ENCODE measurements at regions of chr7 and their contacts with region 1.

Region 1: DNA sequence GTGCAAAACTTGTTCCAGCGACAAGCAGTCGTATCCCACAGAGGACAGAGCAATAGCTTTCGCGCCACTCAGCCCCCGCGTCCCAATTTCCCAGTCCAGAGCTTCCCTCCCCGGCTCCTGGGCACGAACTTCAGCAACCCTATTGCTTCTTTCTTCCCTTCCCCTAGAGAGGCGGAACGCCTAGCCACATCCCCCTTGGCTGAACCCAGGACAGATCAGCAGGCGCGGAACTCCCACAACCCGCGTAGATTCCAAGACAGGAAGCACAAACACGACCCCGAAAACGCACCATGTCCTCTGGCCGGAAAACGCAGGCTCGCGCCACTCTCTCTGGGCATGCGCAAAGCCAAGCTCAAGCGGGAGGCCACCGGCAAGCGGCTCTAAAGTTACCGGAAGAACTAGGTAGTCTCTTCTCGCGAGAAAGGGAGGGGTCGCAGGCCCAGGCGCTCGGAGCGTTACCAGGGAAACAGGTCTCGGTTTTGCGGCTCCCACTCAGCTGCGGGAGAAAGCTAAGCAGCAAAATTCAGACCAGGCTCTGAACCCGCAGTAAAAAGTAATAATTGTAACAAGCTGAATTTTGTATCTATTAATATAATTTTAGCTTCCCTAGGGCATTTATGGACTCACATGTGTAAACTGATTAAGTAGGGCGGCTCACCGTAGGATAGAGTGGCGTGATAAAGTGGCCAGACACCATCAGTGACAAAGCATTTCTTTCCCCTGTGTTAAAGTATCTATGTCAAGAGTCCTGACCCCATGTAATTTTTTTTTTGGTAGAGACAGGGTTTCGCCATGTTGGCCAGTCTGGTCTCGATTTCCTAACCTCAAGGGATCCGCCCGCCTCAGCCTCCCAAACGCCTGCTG is at the start of gene TMEM209:
- DNase-seq: peak; percentile 97
- H3K4me3 Mint-ChIP-seq: peak within 1 kb of the TSS; percentile 96
- H3K27ac Mint-ChIP-seq: peak within 1 kb of the TSS; percentile 98
- H3K4me1 Mint-ChIP-seq: peaks cover 21% of the 10 kb centered on the region
- H3K27me3 Mint-ChIP-seq: peaks cover 2% of the 10 kb centered on the region
- total RNA-seq, gene TMEM209: 35.5 to 35.9 TPM

Region 2: GRCh38 chr7:129958643-129959470 is 246.5 kb before region 1 on chr7:
- CTCF ChIA-PET with region 1: no interaction called
- POLR2A ChIA-PET with region 1: no interaction called
- intact Hi-C with region 1: no loop called
- DNase-seq: no peak
- H3K4me3 Mint-ChIP-seq: no peak overlapping the region
- H3K27ac Mint-ChIP-seq: no peak overlapping the region
- H3K4me1 Mint-ChIP-seq: no peaks in the 10 kb centered on the region
- H3K27me3 Mint-ChIP-seq: no peaks in the 10 kb centered on the region

Region 3: DNA sequence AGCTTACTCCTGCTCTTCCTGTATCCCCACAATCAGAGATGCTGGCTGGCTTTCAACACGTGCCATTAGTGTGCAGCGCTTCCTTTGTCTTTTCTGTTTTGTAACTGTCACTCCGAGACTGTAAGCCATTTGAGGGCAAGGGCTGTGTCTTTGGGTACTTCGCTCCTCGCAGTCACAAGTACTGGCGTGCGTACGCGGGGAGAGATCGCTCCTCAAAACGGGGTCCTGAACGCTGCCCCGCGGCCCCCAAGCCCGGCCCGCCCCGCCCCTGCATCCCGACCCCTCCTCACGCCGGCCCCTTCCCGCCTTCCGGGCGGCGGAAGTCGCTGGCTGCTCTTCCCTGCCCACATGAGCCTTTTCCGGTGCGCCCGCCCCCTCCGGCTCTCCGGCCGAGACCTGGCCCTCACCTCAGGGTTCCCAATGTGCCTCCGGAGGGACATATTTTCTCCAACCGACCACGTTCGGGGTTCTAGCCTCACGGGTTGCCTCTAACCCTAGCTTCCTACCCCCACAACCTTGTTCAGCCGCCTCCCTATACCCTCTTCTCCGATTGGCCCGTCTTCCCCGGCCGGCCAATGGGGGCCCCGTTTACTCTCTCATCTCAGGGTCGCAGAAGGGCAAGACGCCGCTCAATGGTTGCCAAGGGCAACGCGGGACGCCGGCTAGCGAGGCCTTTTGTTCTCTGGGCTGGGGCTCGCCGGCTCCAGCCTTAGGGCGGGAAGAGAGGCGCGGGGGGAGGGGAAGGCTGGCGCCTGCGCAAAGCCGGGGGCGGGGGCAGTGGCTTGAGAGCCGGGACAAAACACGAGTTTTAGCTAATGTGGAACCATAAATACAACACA is 235.4 kb after region 1 on chr7 and contains the start of gene CEP41:
- CTCF ChIA-PET with region 1: no interaction called
- POLR2A ChIA-PET with region 1: interaction called, 8 read pairs
- intact Hi-C with region 1: loop called (anchors 1 kb)
- DNase-seq: peak; percentile 97
- H3K4me3 Mint-ChIP-seq: peak within 1 kb of the TSS; percentile 98
- H3K27ac Mint-ChIP-seq: peak within 1 kb of the TSS; percentile 99
- H3K4me1 Mint-ChIP-seq: peaks cover 21% of the 10 kb centered on the region
- H3K27me3 Mint-ChIP-seq: no peaks in the 10 kb centered on the region
- total RNA-seq, gene CEP41: 14.0 to 16.4 TPM